Colonic mucosa (tissue), 4 donors: ENCODE measurements at regions of chr19 and their contacts with region 1.

Region 1: DNA sequence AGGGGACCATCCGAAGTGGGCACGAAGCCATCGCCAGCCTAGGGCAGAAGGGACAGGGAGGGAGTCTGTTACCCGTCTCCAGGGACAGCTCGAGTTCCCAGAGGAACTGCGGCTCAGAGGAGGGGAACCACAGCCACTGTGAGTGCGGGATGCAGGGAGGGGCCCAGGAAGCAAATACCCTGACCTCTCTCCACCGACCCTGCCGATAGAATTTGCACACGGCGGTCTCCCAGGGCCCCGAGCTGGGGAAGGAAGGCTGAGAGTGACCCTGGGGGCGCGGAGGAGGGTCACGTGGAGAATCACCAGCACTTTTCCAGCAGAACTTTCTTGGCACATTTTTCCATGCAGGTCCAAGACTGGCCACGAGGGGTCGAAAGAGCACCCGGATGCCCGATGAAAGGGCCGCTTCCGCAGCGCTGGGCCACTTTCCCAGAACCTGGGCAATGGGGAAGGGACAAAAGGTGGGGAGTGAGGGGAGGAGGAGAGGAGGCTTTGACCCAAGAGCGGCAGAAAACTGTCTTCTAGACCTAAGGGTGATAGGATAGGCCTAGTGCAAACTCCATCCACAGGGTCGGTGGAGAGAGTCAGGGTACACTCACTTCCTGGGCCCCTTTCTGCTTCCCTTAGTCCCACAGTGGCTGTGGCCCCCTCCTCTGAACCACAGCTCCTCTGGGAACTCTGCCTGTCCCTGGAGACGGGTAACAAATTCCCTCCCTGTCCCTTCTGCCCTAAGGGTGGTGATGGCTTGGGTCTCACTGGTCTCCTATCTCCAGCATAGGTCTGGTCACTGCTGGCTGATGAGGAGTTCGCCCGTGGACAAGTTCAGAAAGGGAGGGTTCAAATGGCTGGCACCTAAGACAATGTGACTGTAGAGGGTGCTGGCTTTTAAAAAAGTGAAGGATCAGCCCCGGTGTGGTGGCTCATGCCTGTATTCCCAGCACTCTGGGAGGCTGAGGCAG is 5.3 kb upstream of the GPR4 start:
- DNase-seq: peak; percentile 87
- H3K4me3 ChIP-seq: no peak overlapping the region
- H3K27ac ChIP-seq: no peak overlapping the region
- H3K4me1 ChIP-seq: no peaks in the 10 kb centered on the region
- H3K27me3 ChIP-seq: peaks cover 7% of the 10 kb centered on the region
- CTCF ChIP-seq: peak; percentile 77

Region 2: GRCh38 chr19:45643024-45643926 is 35.9 kb after region 1 on chr19:
- intact Hi-C with region 1: loop called (anchors 2 kb)
- DNase-seq: peak; percentile 94
- H3K4me3 ChIP-seq: no peak overlapping the region
- H3K27ac ChIP-seq: peak overlapping the region; percentile 67
- H3K4me1 ChIP-seq: peaks cover 8% of the 10 kb centered on the region
- H3K27me3 ChIP-seq: peaks cover 18% of the 10 kb centered on the region
- CTCF ChIP-seq: peak; percentile 98